ENCODE measurements at regions of chr22 and their contacts with region 1.

Region 1: GRCh38 chr22:17570851-17571641 is 7.7 kb downstream of the SLC25A18 start:
- DNase-seq: peak; percentile 92
- H3K4me3 ChIP-seq: peak overlapping the region; percentile 59
- H3K27ac ChIP-seq: peak overlapping the region; percentile 98
- H3K4me1 ChIP-seq: peaks cover 49% of the 10 kb centered on the region
- H3K27me3 ChIP-seq: no peaks in the 10 kb centered on the region
- CTCF ChIP-seq: no peak

Region 2: DNA sequence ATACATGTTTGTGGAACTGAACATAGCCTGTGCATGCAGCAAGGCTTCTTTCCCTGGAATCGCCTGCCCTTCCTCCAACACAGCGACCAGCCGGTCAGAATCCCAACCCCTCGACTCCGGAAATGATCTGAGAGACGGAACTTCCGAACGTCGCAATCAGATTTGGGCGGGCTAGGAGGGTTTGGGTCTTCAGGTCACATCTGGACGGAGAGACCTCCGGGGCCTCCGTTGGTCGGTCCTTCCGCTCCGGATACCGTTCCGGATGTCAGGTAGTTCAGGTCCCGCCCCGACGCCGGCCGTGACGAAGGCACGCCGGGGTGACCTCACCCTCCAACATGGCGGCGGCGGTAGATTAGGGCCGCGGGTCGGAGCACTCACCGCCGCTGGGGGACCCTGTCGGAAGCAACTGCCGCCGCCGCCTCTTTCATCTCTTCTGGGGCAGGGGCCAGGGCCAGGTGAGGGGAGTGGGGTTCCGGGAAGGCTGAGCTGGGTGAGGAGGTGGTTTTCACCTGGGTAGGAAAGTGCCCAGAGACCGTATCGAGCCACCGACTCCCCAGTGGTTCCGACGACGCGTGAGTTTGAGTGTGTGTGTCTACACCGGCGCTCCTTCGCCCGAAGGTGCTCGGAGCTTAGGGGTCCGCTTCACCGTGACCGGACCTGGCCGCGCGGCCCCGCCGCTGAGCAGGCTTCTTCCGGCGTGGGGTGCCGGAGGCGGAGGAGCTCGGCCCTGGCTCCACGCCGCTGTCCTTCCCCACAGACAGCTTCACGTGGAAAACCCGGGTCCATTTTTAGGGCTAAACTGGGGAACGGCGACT is 67.6 kb after region 1 on chr22 and contains the start of gene BCL2L13:
- intact Hi-C with region 1: loop called (anchors 10 kb)
- DNase-seq: peak; percentile 92
- H3K4me3 ChIP-seq: peak within 1 kb of the TSS; percentile 93
- H3K27ac ChIP-seq: peak within 1 kb of the TSS; percentile 99
- H3K4me1 ChIP-seq: peaks cover 33% of the 10 kb centered on the region
- H3K27me3 ChIP-seq: no peaks in the 10 kb centered on the region
- CTCF ChIP-seq: no peak
- total RNA-seq, gene BCL2L13: 111 TPM

Measured in left ventricle myocardium inferior (tissue), 1 donor.